A549 (cell line): ENCODE measurements at regions of chr5 and their contacts with region 1.

Region 1: GRCh38 chr5:142881076-142881783 is 111.1 kb downstream of the ARHGAP26 start:
- DNase-seq: no peak
- ATAC-seq: peak in 1 of 2 experiments; percentile 45; a peak in 2 of 6 replicates
- H3K4me3 ChIP-seq: no peak overlapping the region
- H3K27ac ChIP-seq: no peak overlapping the region
- H3K4me1 ChIP-seq: peaks cover 29% of the 10 kb centered on the region
- CTCF ChIP-seq: no peak
- EP300 ChIP-seq: no peak
- POLR2A ChIP-seq: no peak
- RAD21 ChIP-seq: no peak

Region 2: DNA sequence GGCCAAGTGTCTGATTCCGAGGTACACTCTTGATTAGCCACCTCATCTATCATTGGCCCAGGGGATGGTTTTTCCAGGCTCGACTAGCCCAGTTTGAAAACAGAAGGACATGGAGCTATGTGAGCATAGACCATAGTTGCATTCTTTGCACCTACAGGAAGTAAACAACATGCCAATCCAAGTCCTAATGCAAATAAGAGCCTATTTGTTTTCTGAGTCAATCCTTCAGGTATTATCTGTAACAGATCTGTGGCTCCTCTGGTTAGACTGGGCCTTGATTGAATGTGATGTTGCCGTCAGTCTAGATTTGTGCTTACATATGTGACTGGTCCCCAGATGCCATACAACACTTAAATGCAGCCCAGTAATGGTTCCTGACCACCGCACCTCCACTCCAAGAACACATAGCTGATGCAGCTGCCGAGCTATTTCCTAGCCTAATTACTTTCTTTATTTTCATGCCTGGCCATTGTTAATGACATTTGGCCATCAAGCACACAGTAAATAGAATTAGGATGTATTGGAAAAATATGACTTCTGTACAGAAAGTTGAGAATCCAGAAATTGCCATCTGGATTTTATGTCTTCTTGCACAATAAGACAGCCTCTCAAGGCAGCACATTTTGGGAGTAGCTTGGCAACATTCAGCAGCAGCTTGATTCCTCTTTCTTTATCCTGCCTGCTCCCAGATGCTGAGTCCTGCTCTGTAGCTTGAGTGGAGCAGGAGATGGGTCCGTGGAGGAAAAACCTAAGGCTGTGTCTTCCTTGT is 140.6 kb before region 1 on chr5:
- CTCF ChIA-PET with region 1: interaction called, 473 read pairs
- POLR2A ChIA-PET with region 1: no interaction called
- DNase-seq: peak in 1 of 2 experiments; percentile 41
- ATAC-seq: peak; percentile 40 to 83; a peak in 3 of 6 replicates
- H3K4me3 ChIP-seq: no peak overlapping the region
- H3K27ac ChIP-seq: no peak overlapping the region
- H3K4me1 ChIP-seq: peaks cover 10% of the 10 kb centered on the region
- CTCF ChIP-seq: no peak
- EP300 ChIP-seq: no peak
- POLR2A ChIP-seq: no peak
- RAD21 ChIP-seq: no peak

Region 3: DNA sequence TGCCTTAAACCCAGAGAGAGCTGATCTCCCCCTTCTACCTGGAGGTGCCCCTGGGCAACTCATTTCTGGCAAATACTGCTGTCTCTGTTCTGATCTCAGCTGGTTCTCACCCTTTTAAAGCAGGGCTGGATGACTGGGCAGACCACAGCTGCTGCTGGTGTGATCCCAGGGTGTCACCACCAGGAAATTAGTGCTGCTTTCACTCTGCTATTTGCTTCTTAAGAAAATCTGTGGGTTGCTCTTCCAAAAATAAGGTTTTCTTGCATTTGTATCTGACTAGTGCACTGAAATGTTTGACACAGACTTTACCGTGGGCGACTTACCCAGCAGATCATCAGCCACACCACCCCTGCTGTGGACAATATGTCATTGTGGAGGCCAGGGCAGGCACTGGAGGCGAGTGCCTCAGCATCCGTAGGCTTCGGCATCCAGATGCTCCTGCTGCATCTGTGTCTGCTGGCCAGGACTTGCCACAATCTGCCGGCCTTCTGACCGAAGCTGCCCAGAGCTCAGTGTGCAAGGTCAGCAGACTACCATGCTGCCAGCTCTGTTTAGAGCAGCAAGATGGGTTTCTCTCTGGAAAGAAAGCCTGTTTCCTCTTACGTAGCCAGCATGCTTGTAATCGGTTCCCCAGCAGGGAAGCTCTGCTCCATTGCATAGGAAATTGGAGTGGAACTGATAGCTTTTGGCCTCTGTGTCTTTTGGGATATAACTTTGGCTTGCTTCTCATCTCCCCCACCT is 97.5 kb before region 1 on chr5:
- CTCF ChIA-PET with region 1: interaction called, 12 read pairs
- POLR2A ChIA-PET with region 1: no interaction called
- DNase-seq: no peak
- ATAC-seq: peak; percentile 36 to 41; a peak in 4 of 6 replicates
- H3K4me3 ChIP-seq: no peak overlapping the region
- H3K27ac ChIP-seq: peak overlapping the region in 1 of 2 experiments; percentile 22; a peak in 2 of 6 replicates
- H3K4me1 ChIP-seq: peaks cover 38% of the 10 kb centered on the region
- CTCF ChIP-seq: no peak
- EP300 ChIP-seq: no peak
- POLR2A ChIP-seq: no peak
- RAD21 ChIP-seq: no peak

Region 4: DNA sequence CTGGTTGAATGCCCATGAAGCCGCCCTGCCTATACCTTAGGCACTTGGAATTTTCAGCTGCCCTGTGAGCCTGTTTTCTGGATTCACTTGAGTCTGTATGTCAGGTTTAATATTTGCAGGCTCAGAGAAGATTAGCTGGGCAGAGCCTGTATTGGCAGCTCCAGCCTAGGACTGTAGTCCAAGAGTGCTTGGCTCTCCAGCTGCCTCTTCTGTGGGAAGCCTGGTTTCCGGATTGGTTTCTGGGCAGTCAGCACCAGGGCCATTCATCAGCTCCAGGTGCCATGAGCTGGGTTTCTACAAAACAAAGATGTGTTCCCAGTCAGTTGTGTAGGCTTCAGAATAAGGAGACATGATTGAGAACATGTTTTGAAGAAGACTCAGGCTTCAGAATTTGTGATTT is 21.0 kb before region 1 on chr5:
- CTCF ChIA-PET with region 1: interaction called, 11 read pairs
- POLR2A ChIA-PET with region 1: no interaction called
- DNase-seq: no peak
- ATAC-seq: no peak
- H3K4me3 ChIP-seq: no peak overlapping the region
- H3K27ac ChIP-seq: no peak overlapping the region
- H3K4me1 ChIP-seq: peaks cover 28% of the 10 kb centered on the region
- CTCF ChIP-seq: no peak
- EP300 ChIP-seq: no peak
- POLR2A ChIP-seq: no peak
- RAD21 ChIP-seq: no peak